Heart right ventricle (tissue), 16 donors: ENCODE measurements at regions of chr6 and their contacts with region 1.

Region 1: GRCh38 chr6:152975204-152975915 is 7.5 kb downstream of the FBXO5 start:
- DNase-seq: no peak
- ATAC-seq: no peak
- H3K4me3 ChIP-seq: no peak overlapping the region
- H3K27ac ChIP-seq: peak overlapping the region in 1 of 10 donors; percentile 59
- H3K4me1 ChIP-seq: peaks cover 0 to 54% (median 0%) of the 10 kb centered on the region in 9 donors
- H3K27me3 ChIP-seq: no peaks in the 10 kb centered on the region
- CTCF ChIP-seq: no peak

Region 2: DNA sequence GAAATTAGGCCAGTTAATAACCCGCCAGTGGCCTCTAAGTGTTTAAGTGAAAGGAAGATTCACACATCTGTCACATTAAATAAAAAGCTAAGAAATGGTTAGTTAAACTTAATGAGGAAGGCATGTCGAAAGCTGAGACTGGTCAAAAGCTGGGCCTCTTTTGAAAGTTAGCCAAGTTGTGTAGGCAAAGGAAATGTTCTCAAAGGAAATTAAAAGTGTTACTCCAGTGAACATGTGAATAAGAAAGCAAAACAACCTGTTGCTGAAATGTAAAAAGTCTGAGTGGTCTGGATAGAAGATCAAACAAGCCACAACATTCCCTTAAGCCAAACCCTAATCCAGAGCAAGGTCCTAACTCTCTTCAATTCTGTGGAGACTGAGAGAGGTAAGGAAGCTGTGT is 38.1 kb after region 1 on chr6:
- intact Hi-C with region 1: loop called in 1 of 10 experiments (anchors 5 kb)
- DNase-seq: no peak
- ATAC-seq: no peak
- H3K4me3 ChIP-seq: no peak overlapping the region
- H3K27ac ChIP-seq: no peak overlapping the region
- H3K4me1 ChIP-seq: no peaks in the 10 kb centered on the region
- H3K27me3 ChIP-seq: no peaks in the 10 kb centered on the region
- CTCF ChIP-seq: no peak